GM13977 (cell line): ENCODE measurements at regions of chr14 and their contacts with region 1.

Region 1: DNA sequence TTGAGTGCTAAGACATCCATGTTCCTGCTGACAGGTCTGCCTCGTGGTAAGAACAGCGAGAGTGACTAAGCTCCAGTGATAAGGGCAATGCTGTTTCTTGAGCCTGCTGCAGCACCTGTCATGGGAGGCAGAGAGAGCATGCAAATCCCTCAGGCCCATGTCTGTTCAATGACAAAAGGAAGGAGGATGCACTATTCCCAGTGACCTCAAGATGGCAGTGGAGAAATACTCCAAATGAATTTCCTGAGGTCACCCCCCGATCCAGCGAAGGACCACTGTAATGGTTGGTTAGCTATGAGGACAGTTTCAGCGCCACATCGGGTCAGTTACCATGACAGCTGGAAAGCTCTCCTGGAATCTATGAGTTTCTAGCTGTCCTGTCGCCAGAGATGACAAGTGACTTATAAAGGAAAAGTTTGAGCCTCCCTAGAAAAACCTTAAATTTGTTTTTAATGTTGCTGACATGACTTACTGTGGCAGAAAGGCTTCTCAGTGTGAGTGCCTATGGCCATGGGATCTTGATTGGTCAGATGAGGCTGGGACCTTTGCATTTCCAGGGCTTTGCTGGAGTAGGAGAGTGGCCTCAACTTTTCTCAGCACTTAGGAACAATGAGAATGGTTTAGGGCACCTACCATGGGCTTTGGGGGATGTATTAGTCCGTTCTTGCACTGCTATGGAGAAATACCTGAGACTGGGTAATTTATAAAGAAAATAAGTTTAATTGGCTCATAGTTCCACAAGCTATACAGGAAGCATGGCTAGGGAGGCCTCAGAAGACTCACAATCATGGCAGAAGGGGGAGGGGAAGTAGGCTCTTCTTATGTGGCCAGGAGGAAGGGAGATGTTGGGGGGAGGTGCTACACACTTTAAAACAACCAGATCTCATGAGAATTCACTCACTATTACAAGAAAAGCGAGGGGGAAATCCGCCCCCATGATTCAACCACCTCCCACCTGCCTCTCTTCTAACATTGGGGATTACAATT is 88.0 kb upstream of the TMEM260 start:
- DNase-seq: peak; percentile 21
- CTCF ChIP-seq: peak; percentile 68

Region 2: DNA sequence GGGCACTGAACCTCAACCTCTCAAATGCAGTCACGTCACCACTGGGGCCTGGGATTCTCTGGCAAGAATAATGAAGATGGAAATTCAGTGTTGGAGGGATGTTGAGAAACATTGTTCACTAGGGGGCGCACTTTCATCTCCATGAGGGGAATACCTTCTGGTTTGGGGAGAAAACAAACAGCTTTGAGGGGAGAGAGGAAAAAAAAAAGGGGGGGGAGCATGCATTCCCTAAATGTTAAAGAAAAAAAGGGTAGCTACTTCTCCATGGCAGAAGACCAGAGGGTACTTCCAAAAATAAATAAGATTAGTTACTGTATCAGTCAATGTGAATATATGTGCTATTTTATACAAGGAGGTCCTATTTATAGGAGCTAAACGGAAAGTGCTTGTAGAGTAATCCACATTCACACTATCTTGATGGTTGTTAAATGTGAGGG is 1045.4 kb before region 1 on chr14:
- in situ Hi-C with region 1: loop called (anchors 25 kb)
- DNase-seq: peak; percentile 58
- CTCF ChIP-seq: peak; percentile 68

Region 3: DNA sequence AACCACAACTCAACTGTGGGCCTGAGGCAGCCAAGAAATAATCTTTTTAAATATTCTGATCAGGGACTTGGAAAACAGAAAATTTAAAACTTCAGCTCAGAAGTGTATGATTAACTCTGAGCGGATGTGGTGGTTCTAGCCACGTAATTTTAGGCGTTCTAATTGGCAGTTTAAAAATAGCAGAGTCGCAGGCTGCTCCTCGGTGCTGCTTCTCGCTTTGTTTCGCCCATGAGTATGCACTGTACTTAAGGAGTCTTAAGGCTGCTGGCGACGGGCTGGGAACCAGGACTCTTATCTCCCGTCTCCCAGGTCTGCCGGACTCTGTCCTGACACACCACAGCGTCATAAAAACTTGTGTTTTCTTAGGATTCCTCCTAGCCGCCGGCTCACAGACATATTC is 486.8 kb before region 1 on chr14:
- in situ Hi-C with region 1: no loop called
- DNase-seq: peak; percentile 24
- CTCF ChIP-seq: no peak

Region 4: GRCh38 chr14:57182760-57183503 is 691.3 kb after region 1 on chr14:
- in situ Hi-C with region 1: loop called (anchors 25 kb)
- DNase-seq: peak; percentile 8
- CTCF ChIP-seq: peak; percentile 61

Region 5: GRCh38 chr14:57317316-57317715 is 825.7 kb after region 1 on chr14:
- in situ Hi-C with region 1: loop called (anchors 25 kb)
- DNase-seq: peak; percentile 65
- CTCF ChIP-seq: peak; percentile 81